ENCODE measurements at regions of chr12 and their contacts with region 1.

Region 1: DNA sequence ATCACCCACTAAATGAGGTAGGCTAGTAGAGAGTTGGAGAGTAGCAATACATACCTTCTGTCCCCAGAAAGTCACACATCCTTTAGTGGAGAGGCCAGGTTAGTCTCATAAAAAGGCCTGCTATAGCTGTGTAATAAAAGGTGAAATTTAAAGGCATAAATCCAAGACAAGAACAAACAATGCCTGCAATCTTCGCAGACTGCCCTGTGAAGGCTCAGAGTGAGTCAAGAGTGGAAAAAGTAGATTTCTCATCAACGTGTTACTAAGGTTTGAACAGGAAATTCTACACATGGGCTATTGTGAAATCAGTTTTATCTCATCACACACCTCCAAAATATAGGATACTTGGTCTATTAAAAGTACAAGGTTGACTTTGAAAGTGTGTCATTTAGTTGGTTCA is at the start of gene KLRC1:
- DNase-seq: no peak
- ATAC-seq: no peak
- H3K4me3 ChIP-seq: no peak within 1 kb of the TSS
- H3K27ac ChIP-seq: no peak within 1 kb of the TSS
- H3K4me1 ChIP-seq: no peaks in the 10 kb centered on the region
- H3K27me3 ChIP-seq: no peaks in the 10 kb centered on the region
- CTCF ChIP-seq: no peak
- POLR2A ChIP-seq: no peak
- RAD21 ChIP-seq: no peak
- total RNA-seq, gene KLRC1: not detected

Region 2: GRCh38 chr12:10268037-10268436 is 185.1 kb before region 1 on chr12:
- CTCF ChIA-PET with region 1: no interaction called
- POLR2A ChIA-PET with region 1: no interaction called
- RAD21 ChIA-PET with region 1: no interaction called
- intact Hi-C with region 1: no loop called
- DNase-seq: no peak
- ATAC-seq: no peak
- H3K4me3 ChIP-seq: no peak overlapping the region
- H3K27ac ChIP-seq: no peak overlapping the region
- H3K4me1 ChIP-seq: no peaks in the 10 kb centered on the region
- H3K27me3 ChIP-seq: no peaks in the 10 kb centered on the region
- CTCF ChIP-seq: no peak
- POLR2A ChIP-seq: no peak
- RAD21 ChIP-seq: no peak

Region 3: DNA sequence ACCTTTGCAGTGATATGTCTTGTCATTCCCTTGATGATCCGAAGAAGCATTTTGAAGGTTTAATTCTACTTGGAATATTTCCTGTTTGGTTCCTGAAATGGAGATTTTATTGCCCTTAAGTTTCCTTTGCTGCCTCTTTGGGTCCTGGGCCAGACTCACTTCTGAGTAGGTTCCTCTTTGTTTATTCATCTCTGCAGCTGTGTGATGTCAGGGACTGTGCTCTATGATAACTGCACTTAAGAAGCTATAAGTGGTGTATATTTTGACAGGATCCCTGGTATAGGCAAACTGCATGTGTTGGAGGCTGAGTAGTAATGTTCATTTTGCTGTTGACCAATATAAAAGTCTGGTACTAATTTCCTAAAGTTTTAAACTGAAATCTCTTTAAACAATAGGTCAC is 43.8 kb before region 1 on chr12 and contains the start of gene KLRC4:
- CTCF ChIA-PET with region 1: no interaction called
- POLR2A ChIA-PET with region 1: no interaction called
- RAD21 ChIA-PET with region 1: no interaction called
- intact Hi-C with region 1: loop called (anchors 10 kb)
- DNase-seq: peak; percentile 63
- ATAC-seq: peak; percentile 82
- H3K4me3 ChIP-seq: no peak within 1 kb of the TSS
- H3K27ac ChIP-seq: peak within 1 kb of the TSS; percentile 63
- H3K4me1 ChIP-seq: peaks cover 14% of the 10 kb centered on the region in 2 experiments
- H3K27me3 ChIP-seq: no peaks in the 10 kb centered on the region
- CTCF ChIP-seq: no peak
- POLR2A ChIP-seq: no peak
- RAD21 ChIP-seq: peak; percentile 21; the same call in 1 of the 2 replicates
- total RNA-seq, gene KLRC4: 2.1 TPM

Measured in HCT116 (cell line).